ENCODE measurements at regions of chr1 and their contacts with region 1.

Region 1: GRCh38 chr1:176643536-176643935 is 180.6 kb downstream of the PAPPA2 start:
- DNase-seq: no peak
- ATAC-seq: no peak
- H3K4me3 ChIP-seq: no peak overlapping the region
- H3K4me3 Mint-ChIP-seq: no peak overlapping the region
- H3K27ac ChIP-seq: no peak overlapping the region
- H3K27ac Mint-ChIP-seq: no peak overlapping the region
- H3K4me1 ChIP-seq: no peaks in the 10 kb centered on the region
- H3K4me1 Mint-ChIP-seq: no peaks in the 10 kb centered on the region
- H3K27me3 ChIP-seq: no peaks in the 10 kb centered on the region
- H3K27me3 Mint-ChIP-seq: no peaks in the 10 kb centered on the region
- CTCF ChIP-seq: no peak

Region 2: GRCh38 chr1:176670853-176671252 is 27.3 kb after region 1 on chr1:
- CTCF ChIA-PET with region 1: no interaction called
- POLR2A ChIA-PET with region 1: no interaction called
- intact Hi-C with region 1: loop called in 1 of 2 experiments (anchors 1 kb)
- DNase-seq: no peak
- ATAC-seq: no peak
- H3K4me3 ChIP-seq: no peak overlapping the region
- H3K4me3 Mint-ChIP-seq: no peak overlapping the region
- H3K27ac ChIP-seq: no peak overlapping the region
- H3K27ac Mint-ChIP-seq: no peak overlapping the region
- H3K4me1 ChIP-seq: no peaks in the 10 kb centered on the region
- H3K4me1 Mint-ChIP-seq: no peaks in the 10 kb centered on the region
- H3K27me3 ChIP-seq: no peaks in the 10 kb centered on the region
- H3K27me3 Mint-ChIP-seq: no peaks in the 10 kb centered on the region
- CTCF ChIP-seq: no peak

Measured in CD4-positive, alpha-beta T cell (primary cell).